Heart left ventricle (tissue), 16 donors: ENCODE measurements at regions of chr9 and their contacts with region 1.

Region 1: GRCh38 chr9:107732781-107733522 is 243.4 kb upstream of the KLF4 start:
- DNase-seq: peak in 3 of 5 donors; percentile 37 to 59 (median 55)
- ATAC-seq: peak; percentile 38 to 74 (median 62)
- H3K4me3 ChIP-seq: peak overlapping the region in 10 of 12 donors; percentile 0 to 38 (median 13)
- H3K27ac ChIP-seq: peak overlapping the region; percentile 66 to 91 (median 83)
- H3K4me1 ChIP-seq: peaks cover 0 to 37% (median 26%) of the 10 kb centered on the region in 12 donors
- H3K27me3 ChIP-seq: no peaks in the 10 kb centered on the region
- CTCF ChIP-seq: no peak
- POLR2A ChIP-seq: no peak

Region 2: GRCh38 chr9:107749787-107750444 is 17.0 kb after region 1 on chr9:
- intact Hi-C with region 1: loop called in 1 of 10 experiments (anchors 2 kb)
- DNase-seq: peak; percentile 85 to 93 (median 86)
- ATAC-seq: peak; percentile 93 to 95 (median 94)
- H3K4me3 ChIP-seq: no peak overlapping the region
- H3K27ac ChIP-seq: peak overlapping the region; percentile 50 to 90 (median 75)
- H3K4me1 ChIP-seq: peaks cover 0 to 52% (median 32%) of the 10 kb centered on the region in 12 donors
- H3K27me3 ChIP-seq: no peaks in the 10 kb centered on the region
- CTCF ChIP-seq: no peak
- POLR2A ChIP-seq: no peak

Region 3: DNA sequence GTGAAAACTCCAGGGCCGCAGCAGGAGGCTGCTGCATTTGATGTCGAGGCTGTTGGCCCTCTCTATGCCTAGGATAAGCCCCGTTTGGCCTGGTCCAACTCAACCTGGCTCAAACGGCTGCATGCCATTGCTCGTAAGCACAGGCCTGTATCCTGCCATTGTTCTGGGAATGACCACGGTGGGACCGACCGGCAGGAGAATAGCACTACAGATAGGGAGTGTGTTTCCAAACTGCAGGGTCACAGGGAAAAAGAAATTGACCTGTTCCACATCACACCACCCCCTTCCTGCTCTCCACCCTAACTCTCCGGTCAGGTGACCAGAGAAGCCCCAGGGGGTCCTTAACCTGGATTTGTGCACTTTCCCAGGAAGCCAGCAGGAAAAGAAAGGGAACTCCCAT is 35.3 kb after region 1 on chr9:
- intact Hi-C with region 1: no loop called
- DNase-seq: peak in 4 of 5 donors; percentile 54 to 71 (median 65)
- ATAC-seq: peak; percentile 91 to 98 (median 93)
- H3K4me3 ChIP-seq: no peak overlapping the region
- H3K27ac ChIP-seq: peak overlapping the region; percentile 5 to 79 (median 63)
- H3K4me1 ChIP-seq: peaks cover 0 to 18% (median 9%) of the 10 kb centered on the region in 12 donors
- H3K27me3 ChIP-seq: no peaks in the 10 kb centered on the region
- CTCF ChIP-seq: no peak
- POLR2A ChIP-seq: no peak

Region 4: GRCh38 chr9:107807183-107807582 is 74.2 kb after region 1 on chr9:
- intact Hi-C with region 1: no loop called
- DNase-seq: no peak
- ATAC-seq: no peak
- H3K4me3 ChIP-seq: no peak overlapping the region
- H3K27ac ChIP-seq: no peak overlapping the region
- H3K4me1 ChIP-seq: peaks cover 0 to 9% (median 0%) of the 10 kb centered on the region in 12 donors
- H3K27me3 ChIP-seq: peaks cover 0 to 5% (median 0%) of the 10 kb centered on the region in 9 donors
- CTCF ChIP-seq: no peak
- POLR2A ChIP-seq: no peak